Mammary epithelial cell (primary cell): ENCODE measurements at regions of chr22 and their contacts with region 1.

Region 1: DNA sequence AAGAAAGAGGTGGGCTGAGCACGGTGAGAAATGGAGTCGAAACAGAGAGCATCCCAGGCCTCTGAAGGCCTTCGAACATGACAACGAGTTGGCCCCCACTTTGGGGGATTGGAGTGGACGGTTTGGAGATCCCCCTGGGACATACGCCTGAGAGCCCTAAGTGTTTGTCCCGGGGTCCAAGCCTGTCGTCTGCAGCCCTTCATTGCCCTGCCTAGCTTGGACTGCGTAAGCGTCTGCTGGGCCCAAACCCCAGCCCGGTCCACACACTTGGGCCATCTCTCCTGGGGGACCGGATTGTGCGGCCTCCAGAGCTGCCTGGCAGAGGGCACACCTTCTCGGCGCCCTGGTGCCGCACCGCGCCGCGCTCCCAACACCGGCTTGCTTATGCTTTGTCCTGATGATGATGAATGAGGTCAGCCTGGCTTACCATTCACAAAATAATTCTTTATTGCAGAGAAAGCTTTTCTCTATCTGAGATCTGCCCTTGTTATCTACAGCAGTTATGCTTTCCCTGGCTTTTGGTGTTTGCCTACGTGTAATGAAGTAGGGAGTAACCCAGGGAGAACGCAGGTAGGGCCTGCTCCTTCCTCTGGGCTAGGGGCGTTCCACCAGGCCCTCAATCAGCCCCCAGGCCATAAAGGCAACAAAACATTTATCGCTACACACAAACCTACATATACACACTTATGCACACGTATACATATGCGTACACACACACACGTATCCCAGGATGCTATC is 85.9 kb upstream of the PPARA start:
- DNase-seq: peak; percentile 63
- H3K4me3 ChIP-seq: peak overlapping the region; percentile 34 to 69 (median 43)
- H3K27ac ChIP-seq: peak overlapping the region; percentile 99
- H3K4me1 ChIP-seq: peaks cover 42% of the 10 kb centered on the region
- H3K27me3 ChIP-seq: no peaks in the 10 kb centered on the region
- CTCF ChIP-seq: no peak

Region 2: GRCh38 chr22:46023558-46023981 is 40.8 kb before region 1 on chr22:
- CTCF ChIA-PET with region 1: no interaction called
- dilution Hi-C with region 1: loop called (anchors 5 kb)
- in situ Hi-C with region 1: no loop called
- intact Hi-C with region 1: no loop called
- DNase-seq: no peak
- H3K4me3 ChIP-seq: no peak overlapping the region
- H3K27ac ChIP-seq: no peak overlapping the region
- H3K4me1 ChIP-seq: peaks cover 22% of the 10 kb centered on the region
- H3K27me3 ChIP-seq: no peaks in the 10 kb centered on the region
- CTCF ChIP-seq: no peak

Region 3: GRCh38 chr22:46108564-46109473 is 44.4 kb after region 1 on chr22:
- CTCF ChIA-PET with region 1: no interaction called
- dilution Hi-C with region 1: loop called (anchors 5 kb)
- in situ Hi-C with region 1: loop called in 1 of 2 experiments (anchors 5 kb)
- intact Hi-C with region 1: loop called (anchors 2 kb)
- DNase-seq: peak; percentile 58
- H3K4me3 ChIP-seq: no peak overlapping the region
- H3K27ac ChIP-seq: no peak overlapping the region
- H3K4me1 ChIP-seq: peaks cover 87% of the 10 kb centered on the region
- H3K27me3 ChIP-seq: no peaks in the 10 kb centered on the region
- CTCF ChIP-seq: peak in 1 of 2 donors; percentile 8

Region 4: DNA sequence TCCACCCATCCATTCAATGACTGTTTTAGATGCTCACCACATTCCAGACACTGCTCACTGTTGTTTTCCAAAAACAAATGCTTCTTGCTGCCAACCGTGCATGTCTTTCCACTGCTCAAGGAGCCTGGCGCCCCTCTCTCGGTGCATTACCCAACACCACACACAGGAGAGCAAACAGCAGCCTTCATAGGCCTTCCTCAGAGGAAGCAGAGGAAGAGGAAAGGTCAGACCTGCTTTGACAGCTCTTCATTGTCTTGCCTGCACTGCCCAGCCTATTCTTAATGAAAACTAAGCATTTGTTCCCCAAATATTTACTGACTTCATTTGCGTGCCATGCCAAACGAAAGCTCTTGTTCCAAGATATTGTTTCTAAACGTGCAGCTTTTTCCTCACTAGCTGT is 1827.2 kb after region 1 on chr22:
- CTCF ChIA-PET with region 1: interaction called, 44 read pairs
- dilution Hi-C with region 1: no loop called
- in situ Hi-C with region 1: no loop called
- intact Hi-C with region 1: no loop called
- DNase-seq: no peak
- H3K4me3 ChIP-seq: no peak overlapping the region
- H3K27ac ChIP-seq: no peak overlapping the region
- H3K4me1 ChIP-seq: no peaks in the 10 kb centered on the region
- H3K27me3 ChIP-seq: no peaks in the 10 kb centered on the region
- CTCF ChIP-seq: no peak